Ascending aorta (tissue), 2 donors: ENCODE measurements at regions of chr2 and their contacts with region 1.

Region 1: GRCh38 chr2:235595422-235596010 is 101.7 kb downstream of the AGAP1 start:
- DNase-seq: peak in 1 of 2 donors; percentile 76
- H3K4me3 ChIP-seq: no peak overlapping the region
- H3K27ac ChIP-seq: no peak overlapping the region
- H3K4me1 ChIP-seq: no peaks in the 10 kb centered on the region
- H3K27me3 ChIP-seq: no peaks in the 10 kb centered on the region
- CTCF ChIP-seq: peak; percentile 71 to 77 (median 75)

Region 2: GRCh38 chr2:234550511-234551107 is 1044.9 kb before region 1 on chr2:
- intact Hi-C with region 1: loop called (anchors 5 kb)
- DNase-seq: peak in 1 of 2 donors; percentile 71
- H3K4me3 ChIP-seq: no peak overlapping the region
- H3K27ac ChIP-seq: no peak overlapping the region
- H3K4me1 ChIP-seq: no peaks in the 10 kb centered on the region
- H3K27me3 ChIP-seq: no peaks in the 10 kb centered on the region
- CTCF ChIP-seq: peak; percentile 83 to 98 (median 93)

Region 3: DNA sequence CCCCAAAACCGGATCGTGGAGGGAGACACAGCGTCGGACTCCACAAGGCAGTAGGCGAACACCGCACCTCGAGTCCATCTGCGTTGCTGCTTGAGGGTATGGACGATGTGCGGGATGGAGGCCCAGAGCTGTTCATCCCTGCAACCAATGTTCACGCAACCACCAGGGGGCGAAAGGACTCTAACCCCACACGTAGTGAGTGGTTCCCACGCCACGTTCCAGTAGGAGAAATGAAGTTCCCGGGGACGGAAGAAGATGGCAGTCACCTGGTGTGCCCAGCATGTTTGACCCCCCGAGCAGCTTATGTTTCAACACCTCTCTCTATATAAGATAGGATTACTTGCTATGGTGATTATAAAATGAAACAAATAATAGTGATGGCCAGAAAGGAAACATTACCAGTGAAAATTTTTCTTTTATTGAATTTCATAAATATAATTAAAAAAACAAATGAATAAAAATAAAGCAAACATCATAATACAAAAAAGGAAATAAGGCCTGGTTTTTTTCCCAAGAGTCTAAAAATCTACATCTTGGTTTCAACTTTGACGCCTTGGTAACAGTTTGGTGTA is 459.4 kb before region 1 on chr2:
- intact Hi-C with region 1: loop called (anchors 5 kb)
- DNase-seq: peak in 1 of 2 donors; percentile 69
- H3K4me3 ChIP-seq: no peak overlapping the region
- H3K27ac ChIP-seq: no peak overlapping the region
- H3K4me1 ChIP-seq: no peaks in the 10 kb centered on the region
- H3K27me3 ChIP-seq: no peaks in the 10 kb centered on the region
- CTCF ChIP-seq: peak in 2 of 3 experiments; percentile 14 to 49

Region 4: DNA sequence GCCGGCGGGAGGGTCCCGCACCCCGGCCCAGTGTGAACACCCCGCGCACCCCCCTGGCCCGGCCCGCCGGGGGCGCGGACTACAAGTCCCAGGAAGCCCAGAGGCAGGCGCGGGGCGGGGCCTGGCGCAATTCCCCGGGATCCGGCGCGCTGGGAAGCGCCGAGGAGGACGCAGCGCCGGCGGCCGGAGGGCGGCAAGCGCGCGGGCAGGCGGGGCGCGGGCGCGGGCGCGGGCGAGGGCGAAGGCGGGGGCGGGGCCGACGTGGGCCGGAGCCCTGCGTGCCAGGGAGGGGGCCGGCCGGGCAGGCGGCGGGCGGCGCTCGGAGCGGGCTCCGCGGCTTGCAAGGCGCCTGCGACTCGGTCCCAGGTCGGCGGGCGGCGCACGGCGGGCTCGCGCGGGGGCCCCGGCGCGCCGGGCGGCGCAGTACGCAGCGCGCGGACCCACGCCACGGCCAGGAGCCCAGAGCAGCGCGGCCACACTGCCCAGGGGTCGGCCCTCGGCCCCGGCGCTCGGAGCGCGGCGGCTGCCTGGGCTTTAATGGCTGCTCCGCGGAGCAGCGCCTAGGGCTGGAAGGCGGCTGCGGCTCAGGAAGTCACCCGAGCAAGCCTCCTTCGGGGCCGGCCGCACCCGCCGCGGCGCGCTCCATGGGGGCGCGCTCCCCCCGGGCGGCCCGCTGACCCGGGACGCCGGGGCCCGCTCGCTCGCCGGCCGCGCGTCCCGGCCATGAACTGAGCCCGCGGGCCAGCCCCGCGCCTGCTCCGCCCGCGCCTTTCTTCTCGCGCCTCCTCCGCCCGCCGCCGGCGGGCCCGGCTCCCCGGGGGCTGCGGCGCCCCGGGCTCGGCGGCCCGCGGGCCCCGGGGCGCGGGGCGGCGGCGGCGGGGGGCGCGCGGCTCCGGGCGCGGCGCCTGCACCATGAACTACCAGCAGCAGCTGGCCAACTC is 101.5 kb before region 1 on chr2 and contains the start of gene AGAP1:
- intact Hi-C with region 1: loop called (anchors 10 kb)
- DNase-seq: peak in 1 of 2 donors; percentile 93
- H3K4me3 ChIP-seq: peak within 1 kb of the TSS; percentile 76 to 84
- H3K27ac ChIP-seq: peak within 1 kb of the TSS; percentile 61 to 83
- H3K4me1 ChIP-seq: peaks cover 3 to 15% of the 10 kb centered on the region in 2 donors
- H3K27me3 ChIP-seq: no peaks in the 10 kb centered on the region
- CTCF ChIP-seq: no peak
- total RNA-seq, gene AGAP1: 19.7 TPM

Region 5: GRCh38 chr2:235669269-235669831 is 73.8 kb after region 1 on chr2:
- intact Hi-C with region 1: loop called (anchors 2 kb)
- DNase-seq: peak in 1 of 2 donors; percentile 71
- H3K4me3 ChIP-seq: peak overlapping the region; percentile 68 to 78
- H3K27ac ChIP-seq: no peak overlapping the region
- H3K4me1 ChIP-seq: peaks cover 9 to 10% of the 10 kb centered on the region in 2 donors
- H3K27me3 ChIP-seq: no peaks in the 10 kb centered on the region
- CTCF ChIP-seq: no peak

Region 6: DNA sequence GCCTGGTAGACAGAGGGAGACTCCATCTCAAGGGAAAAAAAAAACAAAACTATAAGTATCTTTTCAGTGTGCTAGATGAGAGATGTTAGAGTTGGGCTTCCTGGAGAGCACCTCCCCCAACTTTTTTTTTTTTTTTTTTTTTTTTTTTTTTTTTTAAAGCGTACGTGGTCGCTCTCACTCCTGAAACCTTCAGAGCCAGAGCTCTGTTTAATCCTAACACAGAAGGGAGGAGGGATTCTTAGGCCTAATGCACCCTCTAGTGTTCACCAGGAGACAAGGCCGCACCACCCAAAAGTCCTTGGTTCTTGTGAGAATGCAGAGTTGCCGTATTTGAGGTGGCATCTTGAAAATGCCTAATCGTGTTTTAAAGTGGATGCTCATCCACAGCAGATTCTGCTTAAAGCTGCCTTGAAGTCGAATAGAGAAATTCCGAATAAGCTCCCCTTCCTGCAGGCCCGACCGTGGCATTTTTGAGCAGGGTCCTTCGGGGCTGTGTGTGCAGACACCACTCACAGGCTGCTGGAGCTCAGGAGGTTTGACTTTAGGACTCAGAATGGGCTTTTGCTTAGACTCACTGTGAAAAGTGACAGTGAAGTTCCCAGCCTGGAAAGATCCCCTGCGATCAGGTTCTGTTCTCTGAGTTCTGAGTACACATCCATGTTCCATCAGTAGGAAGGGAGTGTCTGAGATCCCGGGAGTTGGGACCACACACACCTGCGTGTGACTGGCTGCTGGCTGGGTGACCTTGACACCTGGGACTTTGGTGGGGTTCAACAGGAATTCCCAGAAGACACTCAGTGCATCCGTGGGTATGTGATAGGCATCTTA is 151.0 kb after region 1 on chr2:
- intact Hi-C with region 1: loop called (anchors 2 kb)
- DNase-seq: peak in 1 of 2 donors; percentile 74
- H3K4me3 ChIP-seq: no peak overlapping the region
- H3K27ac ChIP-seq: no peak overlapping the region
- H3K4me1 ChIP-seq: no peaks in the 10 kb centered on the region
- H3K27me3 ChIP-seq: no peaks in the 10 kb centered on the region
- CTCF ChIP-seq: peak; percentile 74 to 80 (median 80)